ENCODE measurements at regions of chr10 and their contacts with region 1.

Region 1: GRCh38 chr10:6014241-6014761 is 37.0 kb upstream of the IL15RA start:
- DNase-seq: peak in 2 of 3 donors; percentile 38 to 54
- ATAC-seq: peak; percentile 4 to 8
- H3K4me3 ChIP-seq: no peak overlapping the region
- H3K27ac ChIP-seq: no peak overlapping the region
- H3K4me1 ChIP-seq: no peaks in the 10 kb centered on the region
- H3K27me3 ChIP-seq: no peaks in the 10 kb centered on the region

Region 2: DNA sequence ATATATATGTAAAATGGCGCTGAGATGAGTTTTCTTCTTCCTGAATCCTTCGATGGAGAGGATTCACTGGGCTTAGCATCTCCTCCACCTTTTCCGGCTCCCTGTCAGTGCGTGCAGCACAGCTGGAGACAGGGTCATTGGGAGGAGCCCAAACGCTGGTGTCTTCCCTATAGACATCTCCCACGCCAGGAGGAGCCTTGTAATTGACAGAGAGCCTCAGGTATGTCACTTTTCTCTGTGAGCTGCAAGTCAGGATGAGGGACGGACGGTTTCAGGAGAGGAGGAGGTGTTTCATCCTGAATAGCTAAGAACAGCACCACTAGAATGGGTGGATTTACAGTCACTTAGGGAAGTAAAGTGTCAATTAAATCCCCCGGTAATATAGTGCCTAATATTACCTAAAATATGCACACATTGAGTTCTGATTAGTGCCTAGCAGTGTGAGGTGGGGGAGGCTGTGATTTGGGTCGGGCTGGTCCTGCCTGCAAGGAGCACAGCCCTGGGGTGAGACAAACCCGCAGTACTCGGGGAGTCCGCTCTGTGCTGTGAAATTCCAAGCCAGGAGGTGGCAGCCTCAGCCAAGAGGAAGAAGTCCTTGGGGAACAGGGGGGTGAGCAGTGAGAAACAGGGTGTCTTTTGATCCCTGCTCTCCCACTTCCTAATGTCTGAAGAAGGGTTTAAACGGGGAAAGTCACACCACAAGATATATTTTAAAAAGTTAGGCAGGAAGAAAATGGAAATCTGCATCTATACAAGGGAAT is 65.1 kb before region 1 on chr10:
- intact Hi-C with region 1: loop called in 1 of 4 experiments (anchors 10 kb)
- DNase-seq: peak; percentile 62 to 84 (median 80)
- ATAC-seq: peak; percentile 31 to 50
- H3K4me3 ChIP-seq: no peak overlapping the region
- H3K27ac ChIP-seq: no peak overlapping the region
- H3K4me1 ChIP-seq: peaks cover 9% of the 10 kb centered on the region
- H3K27me3 ChIP-seq: no peaks in the 10 kb centered on the region

Region 3: GRCh38 chr10:6074489-6075301 is 60.4 kb after region 1 on chr10:
- intact Hi-C with region 1: loop called in 1 of 4 experiments (anchors 5 kb)
- DNase-seq: no peak
- ATAC-seq: peak; percentile 28 to 33
- H3K4me3 ChIP-seq: no peak overlapping the region
- H3K27ac ChIP-seq: no peak overlapping the region
- H3K4me1 ChIP-seq: no peaks in the 10 kb centered on the region
- H3K27me3 ChIP-seq: no peaks in the 10 kb centered on the region

Region 4: DNA sequence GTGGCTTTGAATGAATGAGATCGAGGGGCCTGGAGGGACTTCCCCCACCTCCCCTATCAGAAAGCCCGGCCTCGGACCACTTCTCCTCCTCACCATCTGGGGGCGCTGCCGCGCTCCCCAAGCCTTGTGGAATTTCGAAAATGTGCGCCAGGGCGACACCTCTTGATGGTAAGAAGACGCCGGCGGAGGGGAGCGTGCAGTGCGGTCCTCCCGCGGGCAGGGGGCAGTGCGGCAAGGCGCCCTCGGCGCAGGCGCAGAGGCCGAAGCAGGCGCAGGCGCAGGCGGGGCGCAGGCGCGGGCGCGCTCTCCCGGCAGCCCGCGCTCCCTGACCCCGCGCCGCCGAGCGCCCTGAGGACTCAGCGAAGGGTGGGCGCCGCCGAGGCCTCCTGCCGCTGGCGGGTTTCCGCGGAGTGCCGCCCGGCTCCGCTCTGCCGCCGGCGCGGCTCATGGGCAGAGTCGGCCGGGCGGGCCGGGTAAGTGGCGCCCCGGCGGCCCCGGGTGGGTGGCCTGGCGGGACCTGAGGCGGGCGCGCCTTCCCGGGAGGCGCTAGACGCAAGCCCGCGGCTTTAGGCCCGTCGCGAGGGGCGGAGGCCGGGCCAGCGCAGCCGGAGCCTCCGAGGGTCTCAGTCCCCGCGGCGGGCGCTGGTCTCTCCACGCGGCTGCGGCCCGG is 74.6 kb after region 1 on chr10 and contains the start of gene RBM17:
- intact Hi-C with region 1: loop called in 2 of 4 experiments (anchors 5 to 10 kb)
- DNase-seq: peak; percentile 96 to 99 (median 98)
- ATAC-seq: peak; percentile 92 to 95
- H3K4me3 ChIP-seq: peak within 1 kb of the TSS; percentile 96
- H3K27ac ChIP-seq: peak within 1 kb of the TSS; percentile 87
- H3K4me1 ChIP-seq: peaks cover 3% of the 10 kb centered on the region
- H3K27me3 ChIP-seq: no peaks in the 10 kb centered on the region
- total RNA-seq, gene RBM17: 51.6 to 66.5 (median 57.1) TPM

Region 5: DNA sequence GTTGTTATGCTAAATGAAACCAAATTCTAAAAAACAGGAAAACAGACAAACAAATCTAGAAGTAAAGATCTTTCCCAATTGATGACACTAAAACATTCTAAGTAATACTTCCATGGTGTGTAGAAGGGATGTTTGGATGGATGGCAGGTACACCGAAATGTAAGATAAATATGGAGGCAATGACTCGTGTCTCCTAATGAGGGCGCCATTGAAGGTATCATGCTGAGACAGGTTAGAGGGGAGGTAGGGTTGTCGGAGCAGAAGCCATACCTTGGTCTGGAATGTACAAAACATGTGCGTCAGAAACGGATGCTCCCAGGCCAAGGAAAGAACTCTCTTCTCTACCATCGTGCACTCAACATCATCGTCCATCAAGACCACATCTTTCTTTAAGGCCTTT is 464.4 kb after region 1 on chr10:
- intact Hi-C with region 1: no loop called
- DNase-seq: no peak
- ATAC-seq: no peak
- H3K4me3 ChIP-seq: no peak overlapping the region
- H3K27ac ChIP-seq: no peak overlapping the region
- H3K4me1 ChIP-seq: no peaks in the 10 kb centered on the region
- H3K27me3 ChIP-seq: no peaks in the 10 kb centered on the region

Measured in right cardiac atrium (tissue), 5 donors.